ENCODE measurements at regions of chr17 and their contacts with region 1.

Region 1: GRCh38 chr17:41966463-41967140 is at the start of gene CNP:
- DNase-seq: peak; percentile 92 to 95
- ATAC-seq: peak; percentile 69 to 85
- H3K4me3 ChIP-seq: peak within 1 kb of the TSS; percentile 79
- H3K27ac ChIP-seq: peak within 1 kb of the TSS; percentile 75 to 96
- H3K4me1 ChIP-seq: peaks cover 12% of the 10 kb centered on the region; the same call in 2 of the 3 replicates
- CTCF ChIP-seq: no peak
- EP300 ChIP-seq: no peak
- POLR2A ChIP-seq: peak; percentile 84
- RAD21 ChIP-seq: no peak
- polyA plus RNA-seq, gene CNP: 38.6 and 49.8 TPM in 2 replicates

Region 2: GRCh38 chr17:41794603-41794975 is 172.0 kb before region 1 on chr17:
- CTCF ChIA-PET with region 1: no interaction called
- POLR2A ChIA-PET with region 1: no interaction called
- DNase-seq: no peak
- ATAC-seq: no peak
- H3K4me3 ChIP-seq: no peak overlapping the region
- H3K27ac ChIP-seq: peak overlapping the region; percentile 86 to 92
- H3K4me1 ChIP-seq: peaks cover 54% of the 10 kb centered on the region
- CTCF ChIP-seq: no peak
- EP300 ChIP-seq: no peak
- POLR2A ChIP-seq: no peak
- RAD21 ChIP-seq: no peak

Region 3: GRCh38 chr17:41864836-41865595 is 101.6 kb before region 1 on chr17 and contains the start of gene KLHL11:
- CTCF ChIA-PET with region 1: no interaction called
- POLR2A ChIA-PET with region 1: no interaction called
- DNase-seq: peak; percentile 93 to 96
- ATAC-seq: peak; percentile 89 to 96
- H3K4me3 ChIP-seq: peak within 1 kb of the TSS; percentile 89
- H3K27ac ChIP-seq: peak within 1 kb of the TSS; percentile 92 to 94
- H3K4me1 ChIP-seq: peaks cover 34% of the 10 kb centered on the region
- CTCF ChIP-seq: no peak
- EP300 ChIP-seq: no peak
- POLR2A ChIP-seq: peak; percentile 96
- RAD21 ChIP-seq: peak in 1 of 2 experiments; percentile 24; a peak in 2 of 5 replicates
- polyA plus RNA-seq, gene KLHL11: 12.7 and 13.7 TPM in 2 replicates

Region 4: GRCh38 chr17:41930009-41930832 is 36.4 kb before region 1 on chr17 and contains the start of gene ODAD4:
- CTCF ChIA-PET with region 1: interaction called, 122 read pairs
- POLR2A ChIA-PET with region 1: interaction called, 7 read pairs
- DNase-seq: peak; percentile 98 to 99
- ATAC-seq: peak; percentile 99
- H3K4me3 ChIP-seq: peak within 1 kb of the TSS; percentile 55
- H3K27ac ChIP-seq: peak within 1 kb of the TSS; percentile 76 to 89
- H3K4me1 ChIP-seq: peaks cover 35% of the 10 kb centered on the region
- CTCF ChIP-seq: peak; percentile 45
- EP300 ChIP-seq: no peak; a peak in 1 of 5 replicates
- POLR2A ChIP-seq: peak; percentile 90
- RAD21 ChIP-seq: peak; percentile 49 to 56; a peak in 4 of 5 replicates
- polyA plus RNA-seq, gene ODAD4: 2.0 and 2.3 TPM in 2 replicates

Region 5: GRCh38 chr17:42019509-42020404 is 53.2 kb after region 1 on chr17 and contains the start of gene NKIRAS2:
- CTCF ChIA-PET with region 1: interaction called, 378 read pairs
- POLR2A ChIA-PET with region 1: interaction called, 27 read pairs
- DNase-seq: peak; percentile 94 to 98
- ATAC-seq: peak; percentile 72 to 80
- H3K4me3 ChIP-seq: peak within 1 kb of the TSS; percentile 93
- H3K27ac ChIP-seq: peak within 1 kb of the TSS; percentile 92 to 93
- H3K4me1 ChIP-seq: peaks cover 40% of the 10 kb centered on the region
- CTCF ChIP-seq: peak; percentile 86
- EP300 ChIP-seq: no peak
- POLR2A ChIP-seq: peak; percentile 73
- RAD21 ChIP-seq: no peak
- polyA plus RNA-seq, gene NKIRAS2: 52.2 and 54.3 TPM in 2 replicates

Region 6: GRCh38 chr17:42067351-42068091 is 100.9 kb after region 1 on chr17:
- CTCF ChIA-PET with region 1: interaction called, 10 read pairs
- POLR2A ChIA-PET with region 1: no interaction called
- DNase-seq: peak; percentile 68 to 79
- ATAC-seq: peak; percentile 62 to 84
- H3K4me3 ChIP-seq: no peak overlapping the region
- H3K27ac ChIP-seq: no peak overlapping the region
- H3K4me1 ChIP-seq: peaks cover 4% of the 10 kb centered on the region; the same call in 2 of the 3 replicates
- CTCF ChIP-seq: peak; percentile 92
- EP300 ChIP-seq: no peak
- POLR2A ChIP-seq: no peak
- RAD21 ChIP-seq: peak; percentile 59 to 67

Region 7: GRCh38 chr17:42107597-42108576 is 141.3 kb after region 1 on chr17:
- CTCF ChIA-PET with region 1: interaction called, 231 read pairs
- POLR2A ChIA-PET with region 1: no interaction called
- DNase-seq: peak; percentile 76 to 88
- ATAC-seq: peak; percentile 58 to 89
- H3K4me3 ChIP-seq: peak overlapping the region; percentile 28; the same call in 1 of the 3 replicates
- H3K27ac ChIP-seq: peak overlapping the region in 1 of 2 experiments; percentile 69; a peak in 3 of 6 replicates
- H3K4me1 ChIP-seq: peaks cover 11% of the 10 kb centered on the region; the same call in 1 of the 3 replicates
- CTCF ChIP-seq: no peak
- EP300 ChIP-seq: no peak
- POLR2A ChIP-seq: no peak
- RAD21 ChIP-seq: no peak

Measured in A549 (cell line).